ENCODE measurements at regions of chr9 and their contacts with region 1.

Region 1: GRCh38 chr9:19161257-19162025 is 34.1 kb upstream of the PLIN2 start:
- DNase-seq: no peak
- H3K4me3 ChIP-seq: no peak overlapping the region
- H3K27ac ChIP-seq: peak overlapping the region; percentile 48 to 68 (median 54)
- H3K4me1 ChIP-seq: peaks cover 0 to 14% (median 2%) of the 10 kb centered on the region in 4 donors
- H3K27me3 ChIP-seq: no peaks in the 10 kb centered on the region
- CTCF ChIP-seq: no peak
- EP300 ChIP-seq: no peak
- POLR2A ChIP-seq: no peak

Region 2: DNA sequence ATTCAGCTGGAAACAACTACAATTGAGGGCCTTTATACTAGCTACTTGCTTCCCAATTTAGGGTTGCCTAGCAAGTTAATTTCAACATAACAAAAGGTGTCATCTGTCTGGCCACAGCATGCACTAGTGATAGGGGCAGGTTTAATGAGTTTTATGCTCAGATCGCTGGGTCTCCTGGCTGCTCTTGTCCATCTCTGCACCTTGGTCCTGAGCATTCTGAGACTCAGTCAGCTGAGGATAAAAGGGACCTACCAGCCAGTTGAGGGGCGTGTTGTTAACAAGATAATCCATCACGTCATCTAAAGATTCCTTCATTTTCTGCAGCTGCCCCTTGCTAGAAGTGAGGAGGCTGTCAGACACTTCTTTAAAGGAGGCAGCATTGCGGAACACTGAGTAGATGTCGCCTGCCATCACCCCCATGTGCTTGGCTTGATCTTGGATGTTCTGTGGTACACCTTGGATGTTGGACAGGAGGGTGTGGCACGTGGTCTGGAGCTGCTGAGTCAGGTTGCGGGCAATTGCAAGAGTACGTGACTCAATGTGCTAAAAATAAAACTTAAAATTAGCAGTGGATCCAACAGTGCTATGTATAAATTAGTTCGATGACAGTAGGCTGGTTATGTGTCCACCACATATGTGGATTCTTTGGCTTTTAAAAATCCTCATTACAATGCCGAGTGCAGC is 45.2 kb before region 1 on chr9:
- intact Hi-C with region 1: no loop called
- DNase-seq: no peak
- H3K4me3 ChIP-seq: no peak overlapping the region
- H3K27ac ChIP-seq: no peak overlapping the region
- H3K4me1 ChIP-seq: peaks cover 0 to 19% (median 10%) of the 10 kb centered on the region in 4 donors
- H3K27me3 ChIP-seq: no peaks in the 10 kb centered on the region
- CTCF ChIP-seq: no peak
- EP300 ChIP-seq: no peak
- POLR2A ChIP-seq: no peak

Region 3: DNA sequence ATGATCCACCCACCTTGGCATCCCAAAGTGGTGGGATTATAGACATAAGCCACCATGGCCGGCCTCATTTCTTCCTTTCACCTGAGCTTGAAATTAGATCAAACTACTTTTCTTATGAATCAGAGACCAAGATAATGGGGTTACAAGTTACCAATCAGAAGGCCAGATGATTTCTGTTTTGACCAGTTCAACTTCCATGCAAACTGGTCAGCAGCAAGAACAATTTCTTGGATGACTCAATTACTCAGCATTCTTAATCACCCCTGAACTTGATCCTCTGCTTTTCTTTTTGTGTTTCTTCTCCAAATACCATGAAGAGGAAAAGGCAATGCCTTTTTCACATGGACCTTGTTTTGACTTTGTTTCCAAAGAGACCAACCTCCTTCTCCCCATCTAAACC is 24.2 kb before region 1 on chr9:
- intact Hi-C with region 1: loop called (anchors 2 kb)
- DNase-seq: no peak
- H3K4me3 ChIP-seq: no peak overlapping the region
- H3K27ac ChIP-seq: no peak overlapping the region
- H3K4me1 ChIP-seq: no peaks in the 10 kb centered on the region
- H3K27me3 ChIP-seq: no peaks in the 10 kb centered on the region
- CTCF ChIP-seq: no peak
- EP300 ChIP-seq: no peak
- POLR2A ChIP-seq: no peak

Measured in esophagus muscularis mucosa (tissue), 4 donors.